Left ventricle myocardium superior (tissue), 1 donor: ENCODE measurements at regions of chr1 and their contacts with region 1.

Region 1: GRCh38 chr1:40389871-40390560 is 16.5 kb downstream of the SMAP2 start:
- DNase-seq: no peak
- ATAC-seq: peak; percentile 51

Region 2: DNA sequence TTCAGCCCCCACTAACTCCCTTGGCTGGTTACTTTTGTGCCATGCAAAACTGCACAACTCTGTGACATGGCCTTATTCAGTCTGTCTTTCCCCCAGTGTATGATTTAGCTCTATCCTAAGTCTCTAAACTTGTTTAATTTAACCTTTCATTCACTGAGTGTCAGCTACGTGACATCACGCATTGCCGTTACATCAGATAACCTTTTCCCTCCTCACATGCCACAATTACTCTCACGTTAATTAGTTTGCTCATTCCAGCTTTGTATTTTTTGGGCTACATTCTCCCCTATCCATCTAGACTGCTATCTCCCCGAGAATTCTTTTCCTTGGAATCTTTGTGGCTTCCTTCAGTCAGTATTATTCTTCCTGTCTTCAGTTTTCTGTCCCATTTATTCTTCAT is 171.7 kb before region 1 on chr1:
- intact Hi-C with region 1: loop called (anchors 5 kb)
- DNase-seq: no peak
- ATAC-seq: no peak